ENCODE measurements at regions of chr12 and their contacts with region 1.

Region 1: GRCh38 chr12:3275171-3276041 is 198.2 kb downstream of the TSPAN9 start:
- DNase-seq: peak; percentile 62 to 80 (median 74)
- H3K4me3 ChIP-seq: no peak overlapping the region
- H3K27ac ChIP-seq: no peak overlapping the region
- H3K4me1 ChIP-seq: peaks cover 0 to 3% (median 0%) of the 10 kb centered on the region in 4 experiments
- H3K27me3 ChIP-seq: peaks cover 0 to 90% (median 18%) of the 10 kb centered on the region in 5 experiments

Region 2: DNA sequence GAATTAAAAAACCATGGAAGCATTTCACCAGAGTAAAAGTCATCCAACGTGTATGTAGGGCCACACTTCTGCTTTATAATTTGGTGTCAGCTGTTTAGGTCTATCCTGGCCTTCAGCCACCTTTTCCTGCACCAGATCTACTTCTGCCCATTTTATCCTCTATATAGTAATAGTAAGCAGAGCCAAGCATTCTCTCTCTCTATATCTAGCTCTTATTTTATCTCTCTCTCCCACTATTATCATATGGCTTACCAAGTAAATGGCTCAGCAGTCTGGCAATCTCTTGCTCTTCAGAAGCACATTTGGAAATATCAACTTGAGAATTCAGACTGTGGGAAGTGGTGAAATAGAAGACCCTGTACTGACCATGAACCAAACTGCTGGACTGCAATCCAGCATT is 564.7 kb before region 1 on chr12:
- CTCF ChIA-PET with region 1: no interaction called
- POLR2A ChIA-PET with region 1: no interaction called
- DNase-seq: no peak
- H3K4me3 ChIP-seq: no peak overlapping the region
- H3K27ac ChIP-seq: no peak overlapping the region
- H3K4me1 ChIP-seq: no peaks in the 10 kb centered on the region
- H3K27me3 ChIP-seq: no peaks in the 10 kb centered on the region

Region 3: DNA sequence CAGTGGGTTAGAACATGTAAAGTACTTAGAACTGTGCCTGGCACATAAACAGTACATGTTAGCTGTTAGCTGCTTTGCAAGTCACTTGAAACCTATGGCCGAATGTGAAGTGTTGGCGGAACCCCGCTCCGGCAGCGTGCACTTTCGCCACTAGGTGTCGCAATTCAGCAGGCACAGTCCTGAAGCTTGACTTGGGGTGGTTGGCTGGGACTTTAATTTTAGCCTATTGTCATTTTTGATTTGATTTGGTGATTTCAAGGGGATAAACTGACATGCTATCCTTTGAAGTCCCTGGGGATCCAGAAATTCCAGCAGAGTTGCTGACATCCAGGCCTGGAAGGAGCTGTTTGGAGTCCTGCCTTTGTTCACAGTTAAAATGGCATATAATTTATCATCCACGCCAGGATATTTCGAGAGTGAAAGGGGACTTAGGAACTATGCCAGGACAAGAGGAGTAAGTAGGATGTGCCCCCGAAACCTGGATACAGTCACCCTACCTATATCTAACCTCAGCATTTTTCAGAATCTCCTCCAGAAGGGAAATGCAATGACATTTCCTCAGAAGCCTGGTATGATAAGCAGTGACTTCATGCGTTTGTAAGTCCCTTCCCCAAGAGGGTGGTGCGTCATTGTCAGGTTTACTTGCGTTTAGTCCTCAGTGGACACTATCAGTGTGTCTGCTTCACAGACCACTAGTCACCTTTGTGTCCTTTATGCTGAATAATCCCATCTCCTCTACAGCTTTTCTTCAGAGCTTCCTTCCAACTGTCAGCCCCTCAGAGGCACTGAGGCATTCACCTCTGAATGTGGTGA is 201.8 kb before region 1 on chr12:
- CTCF ChIA-PET with region 1: interaction called, 45 read pairs
- POLR2A ChIA-PET with region 1: no interaction called
- DNase-seq: peak; percentile 87 to 94 (median 91)
- H3K4me3 ChIP-seq: no peak overlapping the region
- H3K27ac ChIP-seq: no peak overlapping the region
- H3K4me1 ChIP-seq: peaks cover 0 to 20% (median 13%) of the 10 kb centered on the region in 4 experiments
- H3K27me3 ChIP-seq: peaks cover 3 to 53% (median 13%) of the 10 kb centered on the region in 5 experiments

Region 4: GRCh38 chr12:3135522-3136461 is 139.6 kb before region 1 on chr12:
- CTCF ChIA-PET with region 1: interaction called, 132 read pairs
- POLR2A ChIA-PET with region 1: no interaction called
- DNase-seq: peak; percentile 82 to 90 (median 84)
- H3K4me3 ChIP-seq: no peak overlapping the region
- H3K27ac ChIP-seq: no peak overlapping the region
- H3K4me1 ChIP-seq: no peaks in the 10 kb centered on the region
- H3K27me3 ChIP-seq: peaks cover 4 to 96% (median 29%) of the 10 kb centered on the region in 5 experiments

Region 5: DNA sequence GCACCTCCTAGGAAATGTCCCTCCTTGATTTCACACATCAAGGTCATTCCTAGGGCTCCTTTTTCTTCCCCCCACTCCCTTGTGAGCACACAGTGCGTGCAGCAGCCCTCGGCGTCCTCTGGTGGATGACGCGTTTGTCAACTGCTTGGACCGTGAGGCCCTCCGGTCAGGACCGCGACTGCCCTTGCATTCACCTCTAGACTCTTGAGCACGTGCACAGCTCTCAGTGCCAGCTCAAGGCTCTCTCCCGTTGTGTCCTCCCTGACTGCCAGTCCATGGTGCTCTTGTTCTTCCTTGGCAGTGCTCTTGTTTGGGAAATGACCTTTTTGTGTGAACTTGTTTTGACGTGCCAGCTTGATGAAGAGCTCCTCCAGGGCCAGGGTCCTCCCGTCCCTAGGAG is 130.4 kb before region 1 on chr12:
- CTCF ChIA-PET with region 1: interaction called, 132 read pairs
- POLR2A ChIA-PET with region 1: no interaction called
- DNase-seq: no peak
- H3K4me3 ChIP-seq: no peak overlapping the region
- H3K27ac ChIP-seq: no peak overlapping the region
- H3K4me1 ChIP-seq: no peaks in the 10 kb centered on the region
- H3K27me3 ChIP-seq: peaks cover 0 to 89% (median 24%) of the 10 kb centered on the region in 5 experiments

Region 6: DNA sequence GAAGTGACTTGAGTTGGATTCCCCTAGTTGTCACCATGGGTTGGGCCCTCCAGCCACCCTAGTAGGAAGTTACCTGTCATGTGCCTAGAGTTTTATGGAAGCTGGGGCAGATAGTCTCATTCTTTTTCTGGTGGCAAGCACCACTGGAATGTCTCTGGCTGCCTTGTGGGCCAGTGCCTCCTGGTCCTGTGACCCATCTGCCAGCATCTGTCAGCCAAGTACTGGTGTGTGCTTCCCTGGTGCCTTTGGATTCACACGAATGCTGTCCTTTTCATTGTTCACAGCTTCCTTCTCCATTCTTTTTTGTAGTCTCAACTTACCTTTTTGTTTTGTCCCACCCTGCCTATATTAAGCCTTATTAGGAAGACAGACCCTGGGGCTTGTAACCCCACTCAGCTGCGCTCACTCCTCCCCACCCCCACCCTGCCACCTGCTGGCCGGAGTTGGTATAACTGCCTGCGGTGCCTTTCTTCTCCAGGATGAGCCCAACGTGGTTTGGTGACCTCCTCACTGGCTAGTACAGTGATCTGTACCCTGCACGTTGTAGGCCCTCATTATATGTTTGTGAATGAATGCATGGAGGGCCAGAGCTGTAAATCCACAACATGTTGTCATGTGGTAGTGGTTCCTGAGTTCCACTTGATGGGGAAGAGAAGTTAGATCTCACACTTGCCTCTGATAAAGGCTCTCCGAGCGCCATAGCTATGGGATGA is 72.5 kb before region 1 on chr12:
- CTCF ChIA-PET with region 1: interaction called, 13 read pairs
- POLR2A ChIA-PET with region 1: no interaction called
- DNase-seq: peak; percentile 50 to 68 (median 56)
- H3K4me3 ChIP-seq: no peak overlapping the region
- H3K27ac ChIP-seq: no peak overlapping the region
- H3K4me1 ChIP-seq: peaks cover 0 to 33% (median 30%) of the 10 kb centered on the region in 4 experiments
- H3K27me3 ChIP-seq: peaks cover 0 to 66% (median 31%) of the 10 kb centered on the region in 5 experiments

Region 7: DNA sequence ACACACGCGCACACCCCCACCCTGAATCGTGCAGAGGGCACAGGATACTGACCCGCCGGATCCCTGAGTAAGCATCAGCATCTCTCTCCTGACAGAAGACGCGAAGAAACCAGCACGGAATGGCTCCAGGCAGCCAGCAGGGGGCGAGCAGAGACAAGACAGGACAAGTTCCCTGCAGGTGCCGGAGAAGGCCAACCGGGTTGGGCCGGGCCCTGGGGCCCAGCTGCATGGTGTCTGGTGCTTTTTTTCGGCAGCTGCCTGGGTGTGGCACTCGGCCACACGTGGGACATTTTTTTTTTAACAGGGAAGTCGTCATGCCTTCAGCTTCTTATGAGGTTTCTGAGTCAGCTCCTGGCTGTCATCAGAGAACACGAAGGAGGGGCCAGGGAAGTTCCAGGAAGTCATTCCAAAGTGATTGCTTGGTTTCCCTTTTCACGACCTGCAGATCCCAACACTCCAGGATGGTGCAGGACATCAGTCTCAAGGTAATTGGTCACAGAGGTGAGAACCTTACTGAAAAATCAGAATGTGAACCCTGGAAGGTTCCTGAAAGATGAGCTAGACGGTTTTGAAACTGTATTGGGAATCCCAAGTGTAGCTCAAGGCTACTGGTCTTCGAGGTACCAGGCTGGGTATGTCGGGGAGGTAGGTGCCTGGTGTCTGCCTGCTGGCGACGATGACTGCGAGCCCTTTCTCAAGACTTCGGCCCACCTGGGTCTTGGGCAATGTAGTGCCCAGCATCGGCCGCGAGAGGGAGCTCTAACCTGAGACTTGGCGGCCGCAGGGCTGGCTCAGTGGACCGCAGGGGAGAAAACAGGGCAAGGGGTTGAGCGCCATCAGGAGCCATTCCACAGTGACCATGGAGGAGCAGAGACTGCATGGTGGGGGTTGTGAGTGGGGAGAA is 24.8 kb after region 1 on chr12:
- CTCF ChIA-PET with region 1: interaction called, 26 read pairs
- POLR2A ChIA-PET with region 1: no interaction called
- DNase-seq: peak; percentile 87 to 91 (median 90)
- H3K4me3 ChIP-seq: peak overlapping the region in 2 of 7 experiments; percentile 10 to 25
- H3K27ac ChIP-seq: no peak overlapping the region
- H3K4me1 ChIP-seq: peaks cover 0 to 9% (median 4%) of the 10 kb centered on the region in 4 experiments
- H3K27me3 ChIP-seq: peaks cover 0 to 66% (median 13%) of the 10 kb centered on the region in 5 experiments

Region 8: GRCh38 chr12:3313675-3314663 is 38.6 kb after region 1 on chr12:
- CTCF ChIA-PET with region 1: no interaction called
- POLR2A ChIA-PET with region 1: no interaction called
- DNase-seq: peak; percentile 44 to 64 (median 62)
- H3K4me3 ChIP-seq: no peak overlapping the region
- H3K27ac ChIP-seq: no peak overlapping the region
- H3K4me1 ChIP-seq: no peaks in the 10 kb centered on the region
- H3K27me3 ChIP-seq: peaks cover 0 to 21% (median 15%) of the 10 kb centered on the region in 5 experiments

Region 9: GRCh38 chr12:3332188-3332587 is 56.8 kb after region 1 on chr12:
- CTCF ChIA-PET with region 1: no interaction called
- POLR2A ChIA-PET with region 1: no interaction called
- DNase-seq: no peak
- H3K4me3 ChIP-seq: no peak overlapping the region
- H3K27ac ChIP-seq: no peak overlapping the region
- H3K4me1 ChIP-seq: no peaks in the 10 kb centered on the region
- H3K27me3 ChIP-seq: peaks cover 0 to 7% (median 2%) of the 10 kb centered on the region in 5 experiments

Measured in common myeloid progenitor, CD34-positive (primary cell).